ENCODE measurements at regions of chr19 and their contacts with region 1.

Region 1: GRCh38 chr19:36687214-36688056 is at the start of gene ZNF567:
- DNase-seq: peak; percentile 99
- H3K4me3 Mint-ChIP-seq: peak within 1 kb of the TSS; percentile 98
- H3K27ac Mint-ChIP-seq: peak within 1 kb of the TSS; percentile 95
- H3K4me1 Mint-ChIP-seq: peaks cover 28% of the 10 kb centered on the region
- H3K27me3 Mint-ChIP-seq: no peaks in the 10 kb centered on the region
- total RNA-seq, gene ZNF567: 8.2 and 8.3 TPM in 2 replicates

Region 2: DNA sequence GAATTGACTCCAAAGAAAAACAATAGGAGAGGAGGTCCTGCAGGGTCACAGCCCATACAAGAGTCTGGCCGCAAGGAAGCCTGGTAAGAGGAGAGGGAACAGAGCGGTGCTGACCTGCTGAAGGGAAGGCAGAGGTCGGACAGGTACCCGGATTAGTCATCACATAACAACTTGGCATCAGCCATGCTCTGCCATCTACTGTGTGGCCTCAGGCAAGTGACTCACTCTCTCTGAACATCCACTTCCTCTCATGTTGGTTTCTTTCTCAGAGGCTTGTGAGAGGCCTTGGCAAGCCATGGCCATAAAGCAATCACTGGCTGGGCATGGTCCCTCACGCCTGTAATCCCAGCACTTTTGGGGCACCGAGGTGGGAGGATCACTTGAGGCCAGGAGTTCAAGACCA is 554.9 kb before region 1 on chr19:
- intact Hi-C with region 1: loop called (anchors 5 kb)
- DNase-seq: peak; percentile 76
- H3K4me3 Mint-ChIP-seq: peak overlapping the region; percentile 24
- H3K27ac Mint-ChIP-seq: peak overlapping the region; percentile 54
- H3K4me1 Mint-ChIP-seq: peaks cover 25% of the 10 kb centered on the region
- H3K27me3 Mint-ChIP-seq: no peaks in the 10 kb centered on the region

Region 3: DNA sequence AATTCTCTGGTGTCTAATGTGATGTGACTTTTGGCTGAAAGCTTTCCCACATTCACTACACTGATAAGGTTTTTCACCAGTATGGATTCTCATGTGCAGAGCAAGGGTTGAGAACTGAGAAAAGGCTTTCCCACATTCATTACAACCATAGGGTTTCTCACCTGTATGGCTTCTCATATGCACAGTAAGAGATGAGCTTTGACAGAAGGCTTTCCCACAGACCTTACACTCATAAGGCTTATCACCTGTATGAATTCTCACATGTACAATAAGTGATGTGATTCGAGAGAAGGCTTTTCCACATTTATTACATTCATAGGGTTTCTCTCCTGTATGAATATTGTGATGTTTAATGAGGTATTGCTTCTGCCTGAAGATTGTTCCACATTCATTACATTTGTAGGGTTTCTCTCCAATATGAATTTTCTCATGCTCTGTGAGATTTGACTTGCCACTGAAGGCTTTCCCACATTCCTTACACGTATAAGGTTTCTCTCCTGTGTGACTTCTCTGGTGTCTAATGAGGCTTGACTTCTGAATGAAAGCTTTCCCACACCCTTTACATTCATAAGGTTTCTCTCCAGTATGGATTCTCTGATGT is 173.3 kb before region 1 on chr19:
- intact Hi-C with region 1: no loop called
- DNase-seq: no peak
- H3K4me3 Mint-ChIP-seq: no peak overlapping the region
- H3K27ac Mint-ChIP-seq: no peak overlapping the region
- H3K4me1 Mint-ChIP-seq: no peaks in the 10 kb centered on the region
- H3K27me3 Mint-ChIP-seq: no peaks in the 10 kb centered on the region

Region 4: GRCh38 chr19:36573020-36573885 is 114.2 kb before region 1 on chr19 and contains the start of gene ZNF529:
- intact Hi-C with region 1: loop called (anchors 2 kb)
- DNase-seq: peak; percentile 97
- H3K4me3 Mint-ChIP-seq: peak within 1 kb of the TSS; percentile 89
- H3K27ac Mint-ChIP-seq: peak within 1 kb of the TSS; percentile 95
- H3K4me1 Mint-ChIP-seq: peaks cover 24% of the 10 kb centered on the region
- H3K27me3 Mint-ChIP-seq: no peaks in the 10 kb centered on the region
- total RNA-seq, gene ZNF529: 16.8 and 17.6 TPM in 2 replicates

Region 5: GRCh38 chr19:36772311-36773222 is 85.1 kb after region 1 on chr19 and contains the start of gene ZNF850:
- intact Hi-C with region 1: loop called (anchors 1 kb)
- DNase-seq: peak; percentile 98
- H3K4me3 Mint-ChIP-seq: peak within 1 kb of the TSS; percentile 95
- H3K27ac Mint-ChIP-seq: peak within 1 kb of the TSS; percentile 89
- H3K4me1 Mint-ChIP-seq: peaks cover 21% of the 10 kb centered on the region
- H3K27me3 Mint-ChIP-seq: no peaks in the 10 kb centered on the region
- total RNA-seq, gene ZNF850: 3.2 and 3.8 TPM in 2 replicates

Region 6: GRCh38 chr19:36915992-36916830 is 228.8 kb after region 1 on chr19 and contains the starts of genes ZNF568 and ZNF829:
- intact Hi-C with region 1: loop called (anchors 5 kb)
- DNase-seq: peak; percentile 97
- H3K4me3 Mint-ChIP-seq: peak within 1 kb of the TSS; percentile 90
- H3K27ac Mint-ChIP-seq: peak within 1 kb of the TSS; percentile 96
- H3K4me1 Mint-ChIP-seq: peaks cover 19% of the 10 kb centered on the region
- H3K27me3 Mint-ChIP-seq: no peaks in the 10 kb centered on the region
- total RNA-seq, gene ZNF568: 4.4 and 6.1 TPM in 2 replicates
- total RNA-seq, gene ZNF829: 4.8 TPM in 2 replicates

Region 7: GRCh38 chr19:37370880-37371661 is 683.6 kb after region 1 on chr19 and contains the start of gene ZNF527:
- intact Hi-C with region 1: loop called (anchors 10 kb)
- DNase-seq: peak; percentile 99
- H3K4me3 Mint-ChIP-seq: peak within 1 kb of the TSS; percentile 94
- H3K27ac Mint-ChIP-seq: peak within 1 kb of the TSS; percentile 91
- H3K4me1 Mint-ChIP-seq: peaks cover 9% of the 10 kb centered on the region
- H3K27me3 Mint-ChIP-seq: no peaks in the 10 kb centered on the region
- total RNA-seq, gene ZNF527: 3.5 and 4.9 TPM in 2 replicates